Mammary epithelial cell (primary cell): ENCODE measurements at regions of chr17 and their contacts with region 1.

Region 1: DNA sequence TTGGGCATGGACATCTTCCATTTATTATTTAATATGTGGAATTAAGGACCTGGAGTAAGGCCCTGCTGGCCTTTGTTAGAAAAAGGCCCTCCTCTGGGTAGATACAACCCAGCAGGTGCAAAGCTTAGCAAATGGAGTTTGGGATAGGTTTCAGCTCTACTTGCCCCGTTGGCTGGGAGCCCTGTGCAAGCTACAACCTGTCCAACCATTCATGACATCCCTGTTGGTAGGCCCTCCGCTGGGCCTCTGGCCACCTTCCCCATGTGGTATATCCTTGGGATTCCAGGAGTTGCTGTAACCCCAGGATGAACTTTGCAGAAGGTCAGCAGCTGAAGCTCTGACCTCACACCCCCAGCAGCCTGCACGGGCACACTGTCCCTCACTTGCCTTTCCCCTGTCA is 6.4 kb downstream of the NGFR start:
- DNase-seq: peak; percentile 65
- H3K4me3 ChIP-seq: no peak overlapping the region
- H3K27ac ChIP-seq: no peak overlapping the region
- H3K4me1 ChIP-seq: peaks cover 36% of the 10 kb centered on the region
- H3K27me3 ChIP-seq: no peaks in the 10 kb centered on the region
- CTCF ChIP-seq: no peak

Region 2: GRCh38 chr17:49447628-49448302 is 53.7 kb before region 1 on chr17:
- CTCF ChIA-PET with region 1: no interaction called
- dilution Hi-C with region 1: no loop called
- in situ Hi-C with region 1: no loop called
- intact Hi-C with region 1: no loop called
- DNase-seq: no peak
- H3K4me3 ChIP-seq: no peak overlapping the region
- H3K27ac ChIP-seq: no peak overlapping the region
- H3K4me1 ChIP-seq: peaks cover 27% of the 10 kb centered on the region
- H3K27me3 ChIP-seq: no peaks in the 10 kb centered on the region
- CTCF ChIP-seq: no peak

Region 3: GRCh38 chr17:49582789-49583188 is 81.3 kb after region 1 on chr17:
- CTCF ChIA-PET with region 1: no interaction called
- dilution Hi-C with region 1: loop called (anchors 5 kb)
- in situ Hi-C with region 1: no loop called
- intact Hi-C with region 1: no loop called
- DNase-seq: no peak
- H3K4me3 ChIP-seq: no peak overlapping the region
- H3K27ac ChIP-seq: no peak overlapping the region
- H3K4me1 ChIP-seq: peaks cover 5% of the 10 kb centered on the region
- H3K27me3 ChIP-seq: no peaks in the 10 kb centered on the region
- CTCF ChIP-seq: no peak